ENCODE measurements at regions of chr11 and their contacts with region 1.

Region 1: GRCh38 chr11:17384002-17384511 is 4.4 kb downstream of the KCNJ11 start:
- DNase-seq: peak; percentile 53 to 79 (median 69)
- ATAC-seq: peak; percentile 67
- H3K4me3 ChIP-seq: no peak overlapping the region
- H3K4me3 Mint-ChIP-seq: no peak overlapping the region
- H3K27ac ChIP-seq: no peak overlapping the region
- H3K27ac Mint-ChIP-seq: no peak overlapping the region
- H3K4me1 ChIP-seq: no peaks in the 10 kb centered on the region
- H3K4me1 Mint-ChIP-seq: peaks cover 0 to 7% (median 0%) of the 10 kb centered on the region in 7 donors
- H3K27me3 ChIP-seq: no peaks in the 10 kb centered on the region
- H3K27me3 Mint-ChIP-seq: peaks cover 0 to 5% (median 0%) of the 10 kb centered on the region in 5 donors

Region 2: DNA sequence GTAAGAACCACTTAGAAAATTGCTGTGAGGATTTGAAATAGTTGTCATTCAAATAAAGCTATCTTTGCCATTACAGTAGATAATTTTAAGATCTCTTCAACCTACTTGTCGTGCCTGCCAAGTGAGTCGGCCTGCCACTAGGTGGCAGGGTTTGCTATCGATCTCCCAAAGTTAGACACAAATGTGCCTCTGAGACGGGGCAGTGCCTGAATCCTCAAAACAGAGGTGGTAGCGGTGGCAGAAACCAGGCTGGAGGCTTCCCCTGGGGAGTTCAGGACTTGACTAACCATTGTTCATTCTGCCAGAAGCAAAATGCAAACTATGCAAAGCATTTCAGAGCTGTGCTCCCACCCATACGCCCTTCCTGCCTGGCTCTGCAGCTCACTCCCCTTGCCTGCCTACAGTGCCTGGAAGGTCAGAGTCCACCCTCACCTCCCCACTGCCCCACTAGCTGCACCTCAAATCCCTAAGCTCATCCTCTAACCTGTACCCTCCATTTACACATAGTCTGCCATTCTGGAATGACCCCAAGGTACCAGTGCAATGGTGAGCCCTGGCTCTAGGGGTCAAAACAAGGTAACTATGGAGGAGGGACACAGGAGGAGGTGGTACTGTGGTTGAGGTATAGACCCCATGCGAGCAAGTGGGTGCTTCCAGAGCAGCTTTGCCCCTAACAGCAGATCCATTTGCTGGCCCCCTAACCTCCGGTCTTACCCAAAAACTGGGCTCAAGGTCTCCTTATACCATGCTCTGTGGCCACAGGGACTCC is 563.5 kb before region 1 on chr11:
- CTCF ChIA-PET with region 1: interaction called, 3 read pairs
- POLR2A ChIA-PET with region 1: no interaction called
- intact Hi-C with region 1: loop called in 1 of 2 experiments (anchors 2 kb)
- DNase-seq: peak in 6 of 9 donors; percentile 6 to 30 (median 21)
- ATAC-seq: peak; percentile 64
- H3K4me3 ChIP-seq: no peak overlapping the region
- H3K4me3 Mint-ChIP-seq: no peak overlapping the region
- H3K27ac ChIP-seq: no peak overlapping the region
- H3K27ac Mint-ChIP-seq: no peak overlapping the region
- H3K4me1 ChIP-seq: no peaks in the 10 kb centered on the region
- H3K4me1 Mint-ChIP-seq: peaks cover 0 to 8% (median 0%) of the 10 kb centered on the region in 7 donors
- H3K27me3 ChIP-seq: no peaks in the 10 kb centered on the region
- H3K27me3 Mint-ChIP-seq: peaks cover 0 to 5% (median 0%) of the 10 kb centered on the region in 5 donors

Region 3: DNA sequence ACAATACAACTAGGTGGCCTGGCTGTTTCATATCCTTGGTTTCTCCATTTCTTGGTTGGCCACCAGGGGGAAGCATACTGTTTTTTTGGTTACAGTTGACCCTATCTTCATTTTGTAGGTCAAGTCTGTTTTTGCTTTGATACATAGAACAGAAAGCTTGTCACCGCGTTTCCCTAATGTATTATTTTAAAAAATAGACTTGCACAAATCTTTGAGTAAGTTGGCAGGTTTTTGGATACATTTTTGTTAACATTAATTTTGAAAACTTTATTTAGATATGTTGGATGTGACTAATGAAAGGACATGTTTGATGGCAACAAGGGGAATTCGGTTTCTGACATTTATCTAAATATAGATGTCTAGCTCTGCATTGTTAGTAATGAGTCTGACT is 29.5 kb before region 1 on chr11:
- CTCF ChIA-PET with region 1: interaction called, 6 read pairs
- POLR2A ChIA-PET with region 1: interaction called, 7 read pairs
- intact Hi-C with region 1: loop called (anchors 1 to 2 kb)
- DNase-seq: peak in 8 of 9 donors; percentile 27 to 55 (median 50)
- ATAC-seq: peak; percentile 43
- H3K4me3 ChIP-seq: no peak overlapping the region
- H3K4me3 Mint-ChIP-seq: peak overlapping the region in 9 of 10 donors; percentile 83 to 95 (median 90)
- H3K27ac ChIP-seq: no peak overlapping the region
- H3K27ac Mint-ChIP-seq: peak overlapping the region in 6 of 9 donors; percentile 29 to 84 (median 60)
- H3K4me1 ChIP-seq: peaks cover 10% of the 10 kb centered on the region in 2 donors
- H3K4me1 Mint-ChIP-seq: peaks cover 28 to 31% (median 29%) of the 10 kb centered on the region in 7 donors
- H3K27me3 ChIP-seq: no peaks in the 10 kb centered on the region
- H3K27me3 Mint-ChIP-seq: peaks cover 0 to 49% (median 0%) of the 10 kb centered on the region in 5 donors

Region 4: GRCh38 chr11:17528181-17528691 is 144.2 kb after region 1 on chr11:
- CTCF ChIA-PET with region 1: interaction called, 7 read pairs
- POLR2A ChIA-PET with region 1: no interaction called
- intact Hi-C with region 1: loop called (anchors 1 kb)
- DNase-seq: peak in 6 of 9 donors; percentile 14 to 49 (median 28)
- ATAC-seq: peak; percentile 52
- H3K4me3 ChIP-seq: no peak overlapping the region
- H3K4me3 Mint-ChIP-seq: no peak overlapping the region
- H3K27ac ChIP-seq: no peak overlapping the region
- H3K27ac Mint-ChIP-seq: no peak overlapping the region
- H3K4me1 ChIP-seq: no peaks in the 10 kb centered on the region
- H3K4me1 Mint-ChIP-seq: no peaks in the 10 kb centered on the region
- H3K27me3 ChIP-seq: no peaks in the 10 kb centered on the region
- H3K27me3 Mint-ChIP-seq: peaks cover 0 to 7% (median 4%) of the 10 kb centered on the region in 5 donors

Region 5: DNA sequence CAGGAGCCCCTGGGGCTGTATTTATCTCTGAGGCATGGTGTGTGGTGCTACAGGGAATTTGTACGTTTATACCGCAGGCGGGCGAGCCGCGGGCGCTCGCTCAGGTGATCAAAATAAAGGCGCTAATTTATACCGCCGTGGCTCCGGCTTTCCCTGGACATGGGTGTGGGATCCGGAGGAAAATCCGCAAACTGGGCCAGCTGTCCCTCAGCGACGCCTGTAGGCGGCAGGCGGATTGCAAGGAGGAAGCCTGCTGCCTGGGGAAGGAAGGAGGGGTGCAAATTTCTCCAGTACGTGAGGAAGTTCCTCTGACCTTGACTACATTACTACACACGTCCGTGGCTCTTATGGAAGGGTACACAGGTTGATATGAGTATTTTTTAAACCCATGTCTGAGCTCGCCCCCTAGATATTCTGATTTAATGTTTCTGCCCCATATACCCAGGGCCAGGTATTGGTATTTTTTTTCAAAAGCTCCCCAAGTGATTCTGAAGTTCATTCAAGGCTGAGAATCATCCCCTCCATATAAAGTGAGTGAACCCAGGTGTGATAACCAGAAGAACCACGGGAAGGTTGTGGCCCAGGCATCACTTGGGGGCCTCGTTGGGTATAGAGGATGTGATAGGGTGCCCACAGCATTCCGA is 338.1 kb after region 1 on chr11:
- CTCF ChIA-PET with region 1: no interaction called
- POLR2A ChIA-PET with region 1: no interaction called
- intact Hi-C with region 1: loop called in 1 of 2 experiments (anchors 10 kb)
- DNase-seq: no peak
- ATAC-seq: no peak
- H3K4me3 ChIP-seq: no peak overlapping the region
- H3K4me3 Mint-ChIP-seq: no peak overlapping the region
- H3K27ac ChIP-seq: no peak overlapping the region
- H3K27ac Mint-ChIP-seq: no peak overlapping the region
- H3K4me1 ChIP-seq: no peaks in the 10 kb centered on the region
- H3K4me1 Mint-ChIP-seq: peaks cover 0 to 6% (median 3%) of the 10 kb centered on the region in 7 donors
- H3K27me3 ChIP-seq: peaks cover 0 to 7% of the 10 kb centered on the region in 2 donors
- H3K27me3 Mint-ChIP-seq: peaks cover 31 to 55% (median 39%) of the 10 kb centered on the region in 5 donors

Measured in naive thymus-derived CD4-positive, alpha-beta T cell (primary cell).